GM12878 (cell line): ENCODE measurements at regions of chr16 and their contacts with region 1.

Region 1: DNA sequence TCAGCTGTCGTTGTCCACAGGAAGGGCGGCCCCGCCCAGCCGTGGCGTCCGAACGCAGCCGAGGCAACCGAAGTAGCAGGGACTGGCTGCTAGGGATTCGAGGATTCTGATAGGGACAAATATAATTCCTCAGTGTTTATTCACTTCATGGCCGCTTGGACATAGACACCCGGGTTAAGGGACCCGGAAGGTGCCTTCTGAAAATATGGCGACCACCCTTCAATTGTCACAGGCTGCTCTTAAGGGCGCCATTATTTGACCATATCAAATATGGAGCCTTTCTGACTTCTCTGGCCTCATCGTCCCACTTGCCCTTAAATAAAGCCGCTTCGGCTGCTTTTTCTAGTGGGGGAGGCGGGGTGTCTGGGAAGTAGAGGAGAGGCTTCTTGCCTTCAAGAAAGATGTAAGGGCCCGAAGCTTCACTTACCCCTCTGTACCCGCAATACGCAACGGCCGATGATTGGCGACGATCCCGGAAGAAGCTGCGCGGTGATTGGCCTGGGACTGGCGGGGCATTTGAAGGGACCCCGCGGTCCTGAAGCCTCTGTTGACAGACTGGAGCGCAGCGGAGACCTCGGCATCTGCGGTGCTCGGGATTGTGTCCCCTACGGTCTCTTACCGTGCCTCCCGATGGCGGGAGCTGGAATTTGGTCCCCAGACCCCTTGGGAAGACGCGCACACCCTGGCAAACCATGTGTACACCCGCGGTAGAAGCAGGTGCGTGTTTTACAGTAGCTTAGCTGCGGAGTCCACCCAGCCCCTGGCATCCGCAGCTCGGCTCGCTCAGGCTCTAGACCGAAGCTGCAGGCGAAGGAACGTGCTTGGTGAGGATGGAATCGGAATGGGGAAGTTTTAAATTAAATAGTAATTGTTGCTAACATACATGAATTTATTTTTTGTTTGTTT is at the start of gene ZNF688:
- DNase-seq: peak; percentile 95
- ATAC-seq: peak; percentile 89
- H3K4me3 ChIP-seq: peak within 1 kb of the TSS; percentile 81
- H3K27ac ChIP-seq: peak within 1 kb of the TSS; percentile 93
- H3K4me1 ChIP-seq: peaks cover 26% of the 10 kb centered on the region
- H3K27me3 ChIP-seq: no peaks in the 10 kb centered on the region
- CTCF ChIP-seq: no peak
- EP300 ChIP-seq: no peak
- POLR2A ChIP-seq: peak; percentile 65
- RAD21 ChIP-seq: no peak
- polyA plus RNA-seq, gene ZNF688: 0.14 to 0.88 TPM

Region 2: GRCh38 chr16:30585400-30586189 is 13.6 kb after region 1 on chr16 and contains the start of gene ZNF785:
- CTCF ChIA-PET with region 1: interaction called, 5 read pairs
- POLR2A ChIA-PET with region 1: interaction called, 9 read pairs
- RAD21 ChIA-PET with region 1: interaction called, 8 read pairs
- SMC1A ChIA-PET with region 1: interaction called, 10 read pairs
- in situ Hi-C with region 1: no loop called
- intact Hi-C with region 1: no loop called
- DNase-seq: peak; percentile 97
- ATAC-seq: peak; percentile 98
- H3K4me3 ChIP-seq: peak within 1 kb of the TSS; percentile 98
- H3K27ac ChIP-seq: peak within 1 kb of the TSS; percentile 89
- H3K4me1 ChIP-seq: peaks cover 3% of the 10 kb centered on the region; the same call in 1 of the 2 replicates
- H3K27me3 ChIP-seq: no peaks in the 10 kb centered on the region
- CTCF ChIP-seq: peak in 2 of 3 experiments; percentile 14 to 33; a peak in 3 of 6 replicates
- EP300 ChIP-seq: no peak
- POLR2A ChIP-seq: peak; percentile 51
- RAD21 ChIP-seq: no peak
- polyA plus RNA-seq, gene ZNF785: 0.87 to 1.5 TPM